Activated CD4-positive, alpha-beta memory T cell treated with anti-CD3 and anti-CD28 coated beads for 36 hours (primary cell): ENCODE measurements at regions of chr2 and their contacts with region 1.

Region 1: GRCh38 chr2:113203901-113204519 is 30.2 kb downstream of the PSD4 start:
- DNase-seq: peak; percentile 85
- H3K4me3 Mint-ChIP-seq: no peak overlapping the region
- H3K27ac Mint-ChIP-seq: peak overlapping the region; percentile 79
- H3K4me1 Mint-ChIP-seq: peaks cover 10% of the 10 kb centered on the region
- H3K27me3 Mint-ChIP-seq: no peaks in the 10 kb centered on the region

Region 2: DNA sequence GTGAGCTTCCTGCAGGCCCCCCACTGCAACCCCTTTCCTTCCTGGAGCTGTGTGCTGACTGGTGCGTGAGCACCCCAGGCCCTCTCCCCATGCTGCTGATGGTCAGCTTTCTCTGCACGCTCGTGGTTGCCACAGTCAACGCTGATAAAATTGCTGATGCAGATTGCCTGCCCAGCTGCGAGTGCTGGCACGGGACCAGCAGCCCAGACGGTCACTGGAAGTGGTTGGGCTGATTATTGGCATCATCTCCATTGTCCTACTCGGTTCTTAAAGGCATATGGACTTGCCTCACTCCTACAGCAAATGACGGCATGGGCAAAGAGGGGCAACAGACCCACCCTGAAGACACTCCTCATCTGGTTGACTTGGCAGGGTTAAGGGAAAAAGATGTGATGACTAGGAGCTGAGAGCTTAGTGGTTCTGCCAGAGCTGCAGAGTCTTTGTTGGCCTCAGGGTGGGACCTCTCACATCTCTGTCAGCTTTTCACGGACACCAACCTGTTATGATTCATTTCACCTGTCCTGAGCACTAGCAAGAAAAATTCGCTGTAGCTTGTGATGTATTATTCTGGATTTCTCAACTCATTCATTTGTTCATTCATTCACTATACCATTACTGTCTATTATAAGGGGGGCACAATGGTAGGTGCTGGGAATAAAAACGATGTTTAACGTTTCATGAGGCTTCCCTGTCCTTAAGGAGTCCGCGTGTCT is 36.3 kb after region 1 on chr2:
- CTCF ChIA-PET with region 1: interaction called, 15 read pairs
- POLR2A ChIA-PET with region 1: interaction called, 3 read pairs
- intact Hi-C with region 1: loop called (anchors 2 kb)
- DNase-seq: no peak
- H3K4me3 Mint-ChIP-seq: no peak overlapping the region
- H3K27ac Mint-ChIP-seq: peak overlapping the region; percentile 88
- H3K4me1 Mint-ChIP-seq: peaks cover 43% of the 10 kb centered on the region
- H3K27me3 Mint-ChIP-seq: no peaks in the 10 kb centered on the region

Region 3: DNA sequence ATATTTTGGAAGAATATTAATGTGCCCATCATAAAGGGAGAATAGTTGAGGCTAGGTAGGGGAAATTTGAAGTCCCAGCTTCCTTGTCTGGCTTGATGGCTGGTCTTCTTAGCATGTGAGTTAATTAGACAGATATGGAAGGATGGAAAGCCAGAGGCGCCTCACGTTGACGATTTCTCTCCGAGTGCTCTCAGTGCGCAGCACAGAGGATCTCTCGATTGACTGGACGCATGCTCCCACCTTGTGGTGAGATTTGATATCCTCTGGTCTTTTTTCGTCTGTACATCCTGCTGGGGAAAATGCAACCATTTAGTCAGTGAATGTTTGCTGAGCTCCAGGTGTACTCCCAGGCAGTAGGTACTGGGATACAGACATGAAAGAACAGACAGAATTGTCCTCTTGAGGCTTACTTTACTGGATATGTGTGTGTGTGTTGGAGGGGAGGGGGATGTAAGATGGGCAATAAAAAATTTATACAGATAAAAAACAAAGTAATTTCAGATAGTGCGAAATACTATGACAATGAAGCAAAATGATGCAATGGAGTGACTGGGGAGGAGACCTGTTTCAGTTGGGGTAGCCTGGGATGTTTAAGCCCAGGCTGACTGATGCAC is 166.6 kb after region 1 on chr2:
- CTCF ChIA-PET with region 1: interaction called, 18 read pairs
- POLR2A ChIA-PET with region 1: no interaction called
- intact Hi-C with region 1: loop called (anchors 1 kb)
- DNase-seq: peak; percentile 80
- H3K4me3 Mint-ChIP-seq: no peak overlapping the region
- H3K27ac Mint-ChIP-seq: no peak overlapping the region
- H3K4me1 Mint-ChIP-seq: peaks cover 4% of the 10 kb centered on the region
- H3K27me3 Mint-ChIP-seq: peaks cover 5% of the 10 kb centered on the region